Natural killer cell (primary cell): ENCODE measurements at regions of chr16 and their contacts with region 1.

Region 1: GRCh38 chr16:11585460-11586377 is 1.0 kb downstream of the LITAF start:
- DNase-seq: peak; percentile 48 to 50
- ATAC-seq: peak in 2 of 3 donors; percentile 9 to 12
- H3K4me3 ChIP-seq: peak overlapping the region; percentile 62
- H3K4me3 Mint-ChIP-seq: peak overlapping the region; percentile 97
- H3K27ac ChIP-seq: peak overlapping the region; percentile 81
- H3K27ac Mint-ChIP-seq: peak overlapping the region; percentile 91 to 94
- H3K4me1 ChIP-seq: peaks cover 56% of the 10 kb centered on the region
- H3K4me1 Mint-ChIP-seq: peaks cover 56 to 63% of the 10 kb centered on the region in 2 donors
- H3K27me3 ChIP-seq: no peaks in the 10 kb centered on the region
- H3K27me3 Mint-ChIP-seq: no peaks in the 10 kb centered on the region
- CTCF ChIP-seq: no peak

Region 2: DNA sequence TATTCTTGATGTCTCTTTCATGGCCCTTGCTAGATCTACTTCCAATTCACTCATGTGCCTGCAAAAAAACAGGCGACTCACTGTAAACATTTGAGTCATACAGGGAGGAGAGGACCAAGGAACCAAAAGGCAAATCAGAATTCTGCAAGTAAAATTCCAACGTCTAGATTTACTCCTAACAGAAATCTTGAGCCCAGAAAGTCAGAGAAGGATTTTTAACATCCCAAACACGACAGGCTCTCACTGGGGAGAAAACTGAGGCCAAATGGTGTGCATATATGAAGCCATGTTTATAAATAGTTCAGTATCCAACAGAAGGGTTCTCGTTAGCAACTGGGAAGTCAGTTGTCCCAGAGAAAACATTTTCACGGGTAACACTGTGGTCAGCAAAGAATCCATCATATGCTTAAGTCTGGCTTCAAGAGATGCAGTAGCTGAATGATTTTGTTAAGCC is 39.1 kb before region 1 on chr16:
- intact Hi-C with region 1: loop called (anchors 5 kb)
- DNase-seq: no peak
- ATAC-seq: no peak
- H3K4me3 ChIP-seq: no peak overlapping the region
- H3K4me3 Mint-ChIP-seq: peak overlapping the region; percentile 21
- H3K27ac ChIP-seq: no peak overlapping the region
- H3K27ac Mint-ChIP-seq: peak overlapping the region; percentile 64 to 86
- H3K4me1 ChIP-seq: peaks cover 3% of the 10 kb centered on the region
- H3K4me1 Mint-ChIP-seq: peaks cover 57 to 60% of the 10 kb centered on the region in 2 donors
- H3K27me3 ChIP-seq: no peaks in the 10 kb centered on the region
- H3K27me3 Mint-ChIP-seq: no peaks in the 10 kb centered on the region
- CTCF ChIP-seq: no peak

Region 3: GRCh38 chr16:11572301-11572995 is 13.3 kb before region 1 on chr16:
- intact Hi-C with region 1: loop called (anchors 1 kb)
- DNase-seq: peak; percentile 73 to 93
- ATAC-seq: peak; percentile 62 to 79 (median 76)
- H3K4me3 ChIP-seq: no peak overlapping the region
- H3K4me3 Mint-ChIP-seq: peak overlapping the region; percentile 88
- H3K27ac ChIP-seq: peak overlapping the region; percentile 42
- H3K27ac Mint-ChIP-seq: peak overlapping the region; percentile 97 to 98
- H3K4me1 ChIP-seq: peaks cover 99% of the 10 kb centered on the region
- H3K4me1 Mint-ChIP-seq: peaks cover 81 to 88% of the 10 kb centered on the region in 2 donors
- H3K27me3 ChIP-seq: no peaks in the 10 kb centered on the region
- H3K27me3 Mint-ChIP-seq: no peaks in the 10 kb centered on the region
- CTCF ChIP-seq: no peak

Region 4: DNA sequence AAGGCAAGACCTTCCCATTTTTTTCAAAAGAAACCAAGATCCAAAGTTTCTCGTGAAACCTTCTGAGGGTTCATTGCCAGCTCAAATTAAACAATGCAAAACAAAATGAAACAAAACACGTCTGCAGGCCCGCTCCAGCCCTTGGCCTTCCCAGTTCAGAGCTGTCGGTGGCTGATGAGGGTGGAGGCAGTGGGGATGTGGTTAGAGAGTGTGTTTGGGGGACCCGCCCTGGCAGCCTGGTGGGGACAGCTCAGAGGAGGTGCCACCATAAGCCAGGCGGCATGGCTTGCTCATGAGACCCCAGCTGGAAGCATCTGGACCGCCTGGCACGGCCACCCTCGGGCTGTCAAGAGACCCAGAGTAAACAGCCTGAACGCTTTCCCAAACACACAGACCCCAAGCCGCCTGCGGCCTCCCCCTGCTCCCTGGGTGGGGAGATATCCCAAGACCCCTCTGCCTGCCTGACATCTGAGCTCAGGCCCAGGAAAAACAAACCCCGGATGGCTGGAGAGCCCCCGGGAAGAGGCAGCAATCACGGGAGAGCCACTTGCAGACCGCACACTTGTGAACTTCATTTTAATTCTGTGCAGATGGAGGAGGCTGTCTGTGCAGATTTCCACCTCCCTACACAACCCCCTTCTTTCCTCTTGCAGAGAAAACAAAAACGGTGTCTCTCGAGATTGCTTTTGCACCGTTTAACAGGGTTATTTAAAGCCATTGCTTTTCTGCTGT is 36.4 kb after region 1 on chr16:
- intact Hi-C with region 1: loop called (anchors 2 kb)
- DNase-seq: peak; percentile 61 to 79
- ATAC-seq: peak; percentile 65 to 82 (median 80)
- H3K4me3 ChIP-seq: no peak overlapping the region
- H3K4me3 Mint-ChIP-seq: peak overlapping the region; percentile 93
- H3K27ac ChIP-seq: peak overlapping the region; percentile 70
- H3K27ac Mint-ChIP-seq: peak overlapping the region; percentile 93 to 97
- H3K4me1 ChIP-seq: peaks cover 78% of the 10 kb centered on the region
- H3K4me1 Mint-ChIP-seq: peaks cover 48 to 58% of the 10 kb centered on the region in 2 donors
- H3K27me3 ChIP-seq: no peaks in the 10 kb centered on the region
- H3K27me3 Mint-ChIP-seq: no peaks in the 10 kb centered on the region
- CTCF ChIP-seq: no peak